Dorsolateral prefrontal cortex (tissue), 120 donors: ENCODE measurements at regions of chr9 and their contacts with region 1.

Region 1: DNA sequence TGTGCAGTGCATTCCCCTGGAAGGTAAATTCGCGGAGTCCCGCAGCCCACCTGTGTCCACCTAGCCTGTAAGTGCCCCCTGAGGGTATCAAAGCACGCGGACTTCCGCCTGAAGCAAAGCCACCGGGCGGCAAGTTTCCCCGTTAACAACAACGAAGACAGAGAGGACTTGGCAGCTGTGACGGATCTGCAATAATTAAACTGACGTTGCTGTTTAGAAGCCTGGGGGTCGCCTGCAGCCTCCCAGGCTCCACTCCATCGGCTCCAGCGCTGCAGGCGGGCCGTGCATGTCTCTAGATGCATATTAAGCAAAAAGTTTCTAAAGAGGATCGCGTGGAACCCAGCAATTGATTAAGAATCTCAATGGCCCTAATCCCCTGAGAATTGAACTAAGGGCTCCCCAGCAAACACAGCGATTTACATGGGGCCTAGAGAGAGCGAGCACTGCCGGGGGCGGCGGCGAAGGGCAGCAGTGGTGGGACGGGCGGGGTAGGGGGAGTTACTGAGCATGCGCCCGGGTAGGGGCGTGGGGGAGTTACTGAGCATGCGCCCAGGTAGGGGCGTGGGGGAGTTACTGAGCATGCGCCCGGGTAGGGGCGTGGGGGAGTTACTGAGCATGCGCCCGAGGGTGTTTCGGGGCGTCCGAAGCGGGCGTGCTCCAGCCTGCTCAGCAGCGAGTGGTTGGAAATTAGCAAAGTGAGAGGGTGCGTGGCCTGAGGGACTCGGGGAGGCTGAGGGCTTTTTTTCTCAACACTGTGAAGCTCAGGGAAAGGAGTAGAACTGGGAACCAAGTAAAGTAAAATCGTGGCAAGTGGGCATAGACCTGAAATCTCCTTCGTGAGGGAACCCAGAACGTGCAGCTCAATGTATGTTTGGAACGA is 255.2 kb downstream of the DOCK8 start:
- DNase-seq: peak; percentile 63 to 84 (median 74)
- H3K4me3 ChIP-seq: peak overlapping the region; percentile 39 to 96 (median 75)
- H3K27ac ChIP-seq: peak overlapping the region in 58 of 59 donors; percentile 11 to 94 (median 83)
- H3K27me3 ChIP-seq: no peaks in the 10 kb centered on the region
- CTCF ChIP-seq: peak in 14 of 56 donors; percentile 4 to 45 (median 20)

Region 2: GRCh38 chr9:546797-547223 is 76.9 kb after region 1 on chr9:
- intact Hi-C with region 1: loop called in 1 of 2 experiments (anchors 2 kb)
- DNase-seq: peak in 2 of 10 donors; percentile 6 to 54
- H3K4me3 ChIP-seq: peak overlapping the region in 46 of 59 donors; percentile 2 to 62 (median 30)
- H3K27ac ChIP-seq: peak overlapping the region; percentile 14 to 93 (median 77)
- H3K27me3 ChIP-seq: no peaks in the 10 kb centered on the region
- CTCF ChIP-seq: peak in 55 of 56 donors; percentile 22 to 79 (median 60)

Region 3: DNA sequence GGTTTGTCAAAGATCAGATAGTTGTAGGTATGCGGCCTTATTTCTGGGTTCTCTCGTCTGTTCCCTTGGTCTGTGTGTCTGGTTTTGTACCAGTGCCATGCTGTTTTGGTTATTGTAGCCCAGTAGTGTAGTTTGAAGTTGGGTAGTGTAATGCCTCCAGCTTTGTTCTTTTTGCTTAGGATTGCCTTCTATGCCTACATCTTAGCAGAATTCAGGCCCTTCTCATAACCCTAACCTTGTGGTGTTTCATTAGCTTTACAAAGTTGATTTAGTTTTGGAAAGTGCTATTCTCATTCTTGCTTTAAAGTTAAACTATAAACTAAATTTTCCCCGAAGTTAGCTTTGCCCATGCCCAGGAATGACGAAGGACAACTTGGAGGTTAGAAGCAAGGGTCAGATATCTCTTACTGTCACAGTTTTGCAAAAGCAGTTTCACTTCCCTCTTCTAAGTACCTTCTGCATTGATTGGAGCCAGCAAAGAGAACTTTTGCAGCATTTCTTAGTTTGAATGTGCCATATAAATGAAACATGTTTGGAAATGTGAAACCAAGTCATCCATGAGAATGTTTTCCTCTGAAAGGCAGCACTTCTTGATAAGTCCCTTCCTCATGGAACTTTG is 97.3 kb after region 1 on chr9:
- intact Hi-C with region 1: loop called in 1 of 2 experiments (anchors 10 kb)
- DNase-seq: no peak
- H3K4me3 ChIP-seq: no peak overlapping the region
- H3K27ac ChIP-seq: peak overlapping the region in 16 of 59 donors; percentile 10 to 93 (median 48)
- H3K27me3 ChIP-seq: no peaks in the 10 kb centered on the region
- CTCF ChIP-seq: no peak